Activated T-helper 2 cell treated with anti-CD3 and anti-CD28 coated beads, Interferon-gamma antibody, Interleukin-2, Interleukin-4, amounts not matched to agents 10 μg/mL and 5 μg/mL and 100 μg/mL, durations not matched to agents 14 hours and 24 hours and 36 hours (primary cell): ENCODE measurements at regions of chr1 and their contacts with region 1.

Region 1: GRCh38 chr1:205186191-205186590 is 25.3 kb downstream of the DSTYK start:
- DNase-seq: no peak
- H3K4me3 Mint-ChIP-seq: no peak overlapping the region
- H3K27ac Mint-ChIP-seq: peak overlapping the region; percentile 66
- H3K4me1 Mint-ChIP-seq: peaks cover 43% of the 10 kb centered on the region
- H3K27me3 Mint-ChIP-seq: no peaks in the 10 kb centered on the region

Region 2: DNA sequence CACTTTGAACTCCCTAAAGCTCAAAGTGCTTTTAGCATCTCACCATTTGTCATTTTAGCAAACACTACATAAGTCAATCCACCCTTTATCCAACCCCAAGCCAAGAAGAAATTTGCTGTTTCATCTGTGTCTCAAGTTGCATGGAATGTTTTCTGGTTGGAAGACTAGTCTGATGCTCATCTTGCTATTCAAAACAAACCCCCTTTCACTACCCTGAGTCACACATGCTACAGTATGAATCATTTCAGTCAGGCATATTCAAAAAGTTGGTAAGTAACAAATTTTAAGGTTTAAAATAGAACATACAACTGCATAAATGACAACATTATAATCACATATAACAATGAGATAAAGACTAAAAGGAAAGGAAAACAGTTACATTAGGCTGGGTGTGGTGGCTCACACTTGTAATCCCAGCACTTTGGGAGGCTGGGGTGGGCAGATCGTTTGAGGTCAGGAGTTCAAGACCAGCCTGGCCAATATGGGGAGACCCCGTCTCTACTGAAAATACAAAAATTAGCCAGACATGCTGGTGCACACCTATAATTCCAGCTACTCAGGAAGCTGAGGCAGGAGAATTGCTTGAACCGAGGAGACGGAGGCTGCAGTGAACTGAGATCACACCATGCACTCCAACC is 13.3 kb before region 1 on chr1:
- intact Hi-C with region 1: loop called (anchors 2 kb)
- DNase-seq: no peak
- H3K4me3 Mint-ChIP-seq: no peak overlapping the region
- H3K27ac Mint-ChIP-seq: peak overlapping the region; percentile 39
- H3K4me1 Mint-ChIP-seq: peaks cover 28% of the 10 kb centered on the region
- H3K27me3 Mint-ChIP-seq: no peaks in the 10 kb centered on the region

Region 3: GRCh38 chr1:205273551-205273982 is 87.4 kb after region 1 on chr1:
- intact Hi-C with region 1: no loop called
- DNase-seq: peak; percentile 73
- H3K4me3 Mint-ChIP-seq: no peak overlapping the region
- H3K27ac Mint-ChIP-seq: no peak overlapping the region
- H3K4me1 Mint-ChIP-seq: peaks cover 14% of the 10 kb centered on the region
- H3K27me3 Mint-ChIP-seq: peaks cover 4% of the 10 kb centered on the region

Region 4: GRCh38 chr1:205610036-205610435 is 423.8 kb after region 1 on chr1:
- intact Hi-C with region 1: no loop called
- DNase-seq: no peak
- H3K4me3 Mint-ChIP-seq: no peak overlapping the region
- H3K27ac Mint-ChIP-seq: no peak overlapping the region
- H3K4me1 Mint-ChIP-seq: peaks cover 37% of the 10 kb centered on the region
- H3K27me3 Mint-ChIP-seq: no peaks in the 10 kb centered on the region